Activated B cell treated with CpG ODN at 0.5 μM for 24 hours (primary cell): ENCODE measurements at regions of chr15 and their contacts with region 1.

Region 1: DNA sequence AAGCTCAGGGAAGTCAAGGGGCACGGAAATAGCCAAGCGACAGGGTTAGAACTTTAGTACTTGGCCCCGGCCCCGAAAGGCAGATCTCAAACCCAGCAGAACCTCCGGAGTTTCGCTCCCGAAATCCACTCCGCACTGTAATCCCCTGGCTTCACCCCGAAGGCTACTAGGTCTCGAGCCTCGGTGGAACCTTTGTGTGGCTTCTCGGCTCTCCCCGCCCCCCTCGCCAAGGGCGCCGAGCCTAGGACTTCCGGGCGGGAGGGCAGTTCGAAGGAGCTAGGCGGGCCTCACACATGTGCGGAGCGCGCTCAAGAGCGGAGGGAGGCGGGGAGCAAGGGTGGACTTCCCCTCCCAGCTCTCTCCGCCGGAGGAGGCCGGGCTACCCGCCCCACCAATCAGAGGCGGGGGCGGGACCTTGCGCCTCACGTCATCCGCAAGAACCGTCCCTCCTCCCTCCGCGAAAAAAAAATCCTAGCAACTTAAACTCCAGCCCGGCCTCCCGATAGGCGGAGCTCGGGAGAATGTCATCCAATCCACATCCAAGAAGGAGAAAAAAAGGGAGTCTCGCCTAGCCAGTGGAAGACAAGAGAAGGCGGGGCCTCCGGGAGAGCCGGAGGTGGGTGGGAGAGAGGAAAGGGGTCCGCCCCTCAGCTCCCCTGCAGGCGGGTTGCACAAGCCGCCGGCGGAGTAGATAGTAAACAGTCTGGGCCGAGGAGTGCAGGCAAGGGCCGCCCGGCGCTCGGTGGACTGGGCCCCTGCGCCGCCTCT is 2.4 kb upstream of the SIN3A start:
- DNase-seq: peak; percentile 93
- ATAC-seq: peak; percentile 38
- H3K4me3 Mint-ChIP-seq: peak overlapping the region; percentile 93
- H3K27ac Mint-ChIP-seq: peak overlapping the region; percentile 97
- H3K4me1 Mint-ChIP-seq: peaks cover 41% of the 10 kb centered on the region
- H3K27me3 Mint-ChIP-seq: no peaks in the 10 kb centered on the region
- CTCF ChIP-seq: no peak

Region 2: DNA sequence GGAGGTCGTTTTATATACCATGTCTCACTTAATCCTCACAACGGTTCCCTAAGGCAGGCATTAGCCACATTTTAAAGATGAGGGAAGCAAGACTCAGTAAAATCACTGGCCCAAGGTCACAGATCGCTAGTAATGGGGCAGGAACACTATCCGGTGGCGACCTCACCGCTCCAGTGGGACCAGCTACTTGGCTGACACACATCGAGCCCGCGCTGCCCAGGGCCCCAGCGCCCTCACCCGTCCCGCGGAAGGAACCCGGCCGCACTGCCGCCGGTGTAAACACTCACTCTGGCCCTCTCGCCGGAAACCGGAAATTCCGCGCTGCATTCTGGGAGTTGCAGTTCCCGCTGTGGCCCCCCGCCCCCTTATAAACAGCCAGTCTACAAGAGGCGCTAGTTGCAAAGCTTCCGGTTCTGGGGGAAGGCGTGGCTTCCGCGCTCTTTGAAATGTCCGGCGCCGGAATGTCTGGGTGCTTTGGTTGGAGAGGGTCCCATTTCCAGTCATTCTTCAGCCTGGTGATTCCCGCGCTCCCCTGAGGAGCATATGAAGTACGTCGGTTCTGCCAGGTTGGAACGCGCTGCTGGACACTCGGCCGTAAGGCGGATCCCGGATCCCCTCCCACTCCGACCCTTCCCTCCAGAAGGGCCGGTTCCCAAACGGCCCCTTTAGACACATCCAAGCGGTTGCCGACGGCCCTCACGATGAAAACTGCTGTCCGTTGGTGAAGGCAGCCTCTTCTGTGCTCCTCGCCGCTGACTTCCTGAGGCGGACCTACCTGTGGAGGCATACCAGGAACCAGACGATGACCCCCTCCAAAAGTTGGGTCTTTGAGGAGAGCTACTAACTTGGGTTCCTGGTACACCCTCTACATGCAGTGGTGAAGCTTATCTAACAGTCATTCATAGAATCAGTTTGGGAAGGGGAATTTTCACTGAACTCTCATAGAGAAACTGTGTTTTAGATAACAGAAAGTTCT is 992.7 kb before region 1 on chr15 and contains the start of gene UBL7:
- CTCF ChIA-PET with region 1: no interaction called
- POLR2A ChIA-PET with region 1: interaction called, 11 read pairs
- intact Hi-C with region 1: loop called (anchors 2 kb)
- DNase-seq: peak; percentile 92
- ATAC-seq: peak; percentile 95
- H3K4me3 Mint-ChIP-seq: peak within 1 kb of the TSS; percentile 93
- H3K27ac Mint-ChIP-seq: peak within 1 kb of the TSS; percentile 91
- H3K4me1 Mint-ChIP-seq: peaks cover 44% of the 10 kb centered on the region
- H3K27me3 Mint-ChIP-seq: no peaks in the 10 kb centered on the region
- CTCF ChIP-seq: no peak
- total RNA-seq, gene UBL7: 40.6 and 48.8 TPM in 2 replicates

Region 3: GRCh38 chr15:74937596-74938296 is 516.1 kb before region 1 on chr15 and contains the start of gene COX5A:
- CTCF ChIA-PET with region 1: no interaction called
- POLR2A ChIA-PET with region 1: interaction called, 5 read pairs
- intact Hi-C with region 1: loop called (anchors 2 kb)
- DNase-seq: peak; percentile 86
- ATAC-seq: peak; percentile 97
- H3K4me3 Mint-ChIP-seq: peak within 1 kb of the TSS; percentile 86
- H3K27ac Mint-ChIP-seq: peak within 1 kb of the TSS; percentile 90
- H3K4me1 Mint-ChIP-seq: peaks cover 34% of the 10 kb centered on the region
- H3K27me3 Mint-ChIP-seq: no peaks in the 10 kb centered on the region
- CTCF ChIP-seq: no peak
- total RNA-seq, gene COX5A: 150 and 159 TPM in 2 replicates

Region 4: DNA sequence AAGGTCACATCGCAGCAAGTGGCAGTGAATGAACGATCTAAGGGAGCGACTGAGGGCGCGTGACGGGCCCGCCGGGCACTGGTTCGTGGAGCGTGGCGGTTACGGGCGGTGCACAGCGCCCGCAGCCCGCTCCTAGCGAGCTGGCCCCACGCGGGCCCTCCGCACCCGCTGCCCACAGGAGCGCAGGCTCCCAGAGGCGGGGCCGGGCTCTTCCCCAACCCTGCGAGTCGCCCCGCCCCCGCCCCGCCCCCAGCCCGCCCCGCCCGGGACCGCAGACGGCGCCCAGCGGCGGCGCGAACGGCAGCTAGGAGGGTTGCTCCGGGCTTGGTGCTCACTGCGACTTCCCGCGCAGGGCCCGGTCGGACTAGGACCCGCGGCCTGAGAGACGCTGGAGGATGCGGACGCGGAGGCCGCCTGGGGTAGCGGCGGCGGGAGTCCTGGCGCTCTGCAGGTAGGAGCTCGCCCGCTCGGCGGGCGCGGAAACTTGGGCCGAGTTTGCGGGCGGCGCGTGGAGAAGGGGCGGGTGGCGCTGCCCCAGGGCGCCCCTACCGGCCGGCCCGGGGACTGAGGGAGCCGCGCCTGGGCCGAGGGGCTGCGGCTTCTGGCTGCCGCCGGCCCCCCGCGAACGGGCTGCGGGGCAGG is 252.2 kb before region 1 on chr15 and contains the start of gene C15orf39:
- CTCF ChIA-PET with region 1: no interaction called
- POLR2A ChIA-PET with region 1: interaction called, 6 read pairs
- intact Hi-C with region 1: loop called (anchors 5 kb)
- DNase-seq: peak; percentile 83
- ATAC-seq: peak; percentile 58
- H3K4me3 Mint-ChIP-seq: peak within 1 kb of the TSS; percentile 90
- H3K27ac Mint-ChIP-seq: peak within 1 kb of the TSS; percentile 82
- H3K4me1 Mint-ChIP-seq: peaks cover 37% of the 10 kb centered on the region
- H3K27me3 Mint-ChIP-seq: peaks cover 4% of the 10 kb centered on the region
- CTCF ChIP-seq: no peak
- total RNA-seq, gene C15orf39: 59.6 and 73.2 TPM in 2 replicates

Region 5: DNA sequence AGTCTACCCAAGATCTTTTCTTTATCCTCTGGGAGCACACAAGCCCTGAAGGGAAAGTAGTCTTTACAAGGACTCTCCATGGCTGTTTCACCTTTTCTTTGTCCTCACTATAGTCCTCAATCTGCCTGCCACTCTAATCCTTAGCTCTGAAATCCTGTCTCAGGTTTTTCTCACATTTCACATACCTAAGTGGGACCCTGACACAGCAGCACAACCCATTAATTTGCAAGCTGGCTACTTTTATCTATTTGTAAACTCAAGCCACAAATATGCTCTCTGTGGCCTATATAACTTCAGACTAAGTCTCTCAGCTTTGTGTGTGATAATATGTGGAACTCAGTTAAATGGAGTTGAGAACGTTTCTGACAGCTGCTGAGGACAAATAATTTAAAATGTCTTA is 22.2 kb before region 1 on chr15:
- CTCF ChIA-PET with region 1: no interaction called
- POLR2A ChIA-PET with region 1: interaction called, 20 read pairs
- intact Hi-C with region 1: no loop called
- DNase-seq: no peak
- ATAC-seq: no peak
- H3K4me3 Mint-ChIP-seq: no peak overlapping the region
- H3K27ac Mint-ChIP-seq: no peak overlapping the region
- H3K4me1 Mint-ChIP-seq: peaks cover 18% of the 10 kb centered on the region
- H3K27me3 Mint-ChIP-seq: no peaks in the 10 kb centered on the region
- CTCF ChIP-seq: no peak

Region 6: DNA sequence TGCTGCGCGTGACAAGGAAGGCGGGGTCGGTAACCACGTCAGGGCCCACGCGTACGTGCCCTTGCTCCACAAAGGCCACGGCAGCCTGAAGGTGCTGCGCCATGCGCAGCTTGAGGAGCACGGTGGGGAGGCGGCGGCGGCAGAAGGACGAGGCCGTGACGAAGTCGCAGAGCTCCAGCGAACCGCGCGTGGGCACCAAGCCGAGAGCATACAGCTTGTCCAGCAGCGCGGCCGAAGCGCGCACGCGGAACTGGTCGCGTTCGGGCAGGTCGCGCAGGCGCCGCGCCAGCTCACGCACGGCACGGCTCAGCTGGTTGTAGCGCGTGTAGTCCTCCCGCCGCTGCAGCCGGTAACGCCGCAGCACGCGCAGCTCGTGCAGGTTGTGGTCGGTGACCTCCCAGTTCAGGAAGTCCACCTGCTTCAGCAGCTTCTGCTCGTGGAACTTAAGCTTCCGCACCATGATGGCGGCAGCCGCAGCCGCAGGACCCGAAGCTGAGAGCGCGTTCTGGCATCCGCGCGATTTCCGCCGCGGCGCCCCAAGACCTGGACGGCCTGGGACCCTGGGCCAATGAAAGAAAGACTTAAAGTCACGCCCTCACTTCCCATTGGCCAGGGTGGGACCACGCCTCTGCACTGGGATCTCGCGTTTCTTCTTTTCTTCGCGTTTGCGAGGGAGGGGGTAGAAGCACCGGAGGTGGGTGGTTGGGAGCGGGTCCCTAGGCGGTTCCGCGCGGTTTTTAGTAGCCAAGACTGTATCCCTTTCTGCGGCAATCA is 186.0 kb after region 1 on chr15 and contains the start of gene IMP3:
- CTCF ChIA-PET with region 1: no interaction called
- POLR2A ChIA-PET with region 1: interaction called, 115 read pairs
- intact Hi-C with region 1: loop called (anchors 1 kb)
- DNase-seq: peak; percentile 83
- ATAC-seq: peak; percentile 94
- H3K4me3 Mint-ChIP-seq: peak within 1 kb of the TSS; percentile 91
- H3K27ac Mint-ChIP-seq: peak within 1 kb of the TSS; percentile 92
- H3K4me1 Mint-ChIP-seq: peaks cover 38% of the 10 kb centered on the region
- H3K27me3 Mint-ChIP-seq: no peaks in the 10 kb centered on the region
- CTCF ChIP-seq: no peak
- total RNA-seq, gene IMP3: 65.6 and 72.6 TPM in 2 replicates